ENCODE measurements at regions of chr5 and their contacts with region 1.

Region 1: DNA sequence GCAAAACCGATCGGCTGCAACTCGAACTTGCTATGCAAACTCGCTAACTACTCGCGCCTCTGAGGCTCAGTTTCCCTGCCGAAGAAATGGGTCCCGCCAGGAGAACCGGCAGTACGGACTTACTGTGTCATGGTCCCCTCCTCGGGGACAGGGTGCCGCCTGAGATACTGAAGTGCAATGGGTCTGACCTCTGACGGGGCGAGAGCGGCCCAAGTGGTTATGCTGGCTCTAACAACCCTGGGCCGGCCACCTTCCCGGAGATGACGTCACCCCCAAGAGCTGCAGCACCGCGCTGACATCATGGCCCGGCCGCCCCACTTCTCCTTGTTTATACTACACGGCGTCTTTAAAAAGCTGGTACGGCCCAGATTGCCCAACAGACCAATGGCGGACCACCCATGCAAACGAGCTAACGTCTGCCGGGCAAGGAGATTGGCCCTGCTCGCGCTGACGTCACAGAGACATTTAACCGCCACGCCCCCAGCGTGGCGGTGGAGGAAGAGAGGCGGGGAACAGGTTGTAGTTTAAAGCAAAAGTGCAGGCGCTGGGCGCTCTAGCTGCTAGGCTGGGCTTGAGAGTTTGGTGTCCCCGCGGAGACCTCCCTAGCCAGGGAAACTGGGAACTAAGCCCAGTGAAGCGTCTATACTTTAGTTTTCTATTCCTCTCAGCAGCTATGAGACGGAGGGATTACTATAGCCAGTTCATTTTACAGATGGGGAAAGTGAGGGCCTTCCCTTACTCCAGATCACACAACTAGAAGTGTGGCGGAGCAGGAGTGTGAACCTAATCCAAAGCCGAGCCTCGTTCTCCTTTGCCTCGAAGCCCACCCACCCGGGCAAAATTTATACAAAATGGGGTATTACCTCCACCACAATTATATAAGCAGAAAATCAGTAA is 654 bp upstream of the RNF44 start:
- H3K4me3 Mint-ChIP-seq: peak overlapping the region; percentile 94
- H3K27ac Mint-ChIP-seq: peak overlapping the region; percentile 96
- H3K4me1 Mint-ChIP-seq: peaks cover 72% of the 10 kb centered on the region
- H3K27me3 Mint-ChIP-seq: no peaks in the 10 kb centered on the region

Region 2: GRCh38 chr5:176388444-176389134 is 149.3 kb before region 1 on chr5 and contains the starts of genes HIGD2A and NOP16:
- intact Hi-C with region 1: loop called (anchors 10 kb)
- H3K4me3 Mint-ChIP-seq: peak within 1 kb of the TSS; percentile 100
- H3K27ac Mint-ChIP-seq: peak within 1 kb of the TSS; percentile 100
- H3K4me1 Mint-ChIP-seq: peaks cover 77% of the 10 kb centered on the region
- H3K27me3 Mint-ChIP-seq: no peaks in the 10 kb centered on the region

Region 3: GRCh38 chr5:176553262-176554077 is 15.6 kb after region 1 on chr5:
- intact Hi-C with region 1: no loop called
- H3K4me3 Mint-ChIP-seq: no peak overlapping the region
- H3K27ac Mint-ChIP-seq: no peak overlapping the region
- H3K4me1 Mint-ChIP-seq: peaks cover 54% of the 10 kb centered on the region
- H3K27me3 Mint-ChIP-seq: peaks cover 36% of the 10 kb centered on the region

Region 4: GRCh38 chr5:176573564-176574296 is 35.9 kb after region 1 on chr5:
- intact Hi-C with region 1: loop called (anchors 1 kb)
- H3K4me3 Mint-ChIP-seq: no peak overlapping the region
- H3K27ac Mint-ChIP-seq: no peak overlapping the region
- H3K4me1 Mint-ChIP-seq: peaks cover 7% of the 10 kb centered on the region
- H3K27me3 Mint-ChIP-seq: peaks cover 21% of the 10 kb centered on the region

Region 5: DNA sequence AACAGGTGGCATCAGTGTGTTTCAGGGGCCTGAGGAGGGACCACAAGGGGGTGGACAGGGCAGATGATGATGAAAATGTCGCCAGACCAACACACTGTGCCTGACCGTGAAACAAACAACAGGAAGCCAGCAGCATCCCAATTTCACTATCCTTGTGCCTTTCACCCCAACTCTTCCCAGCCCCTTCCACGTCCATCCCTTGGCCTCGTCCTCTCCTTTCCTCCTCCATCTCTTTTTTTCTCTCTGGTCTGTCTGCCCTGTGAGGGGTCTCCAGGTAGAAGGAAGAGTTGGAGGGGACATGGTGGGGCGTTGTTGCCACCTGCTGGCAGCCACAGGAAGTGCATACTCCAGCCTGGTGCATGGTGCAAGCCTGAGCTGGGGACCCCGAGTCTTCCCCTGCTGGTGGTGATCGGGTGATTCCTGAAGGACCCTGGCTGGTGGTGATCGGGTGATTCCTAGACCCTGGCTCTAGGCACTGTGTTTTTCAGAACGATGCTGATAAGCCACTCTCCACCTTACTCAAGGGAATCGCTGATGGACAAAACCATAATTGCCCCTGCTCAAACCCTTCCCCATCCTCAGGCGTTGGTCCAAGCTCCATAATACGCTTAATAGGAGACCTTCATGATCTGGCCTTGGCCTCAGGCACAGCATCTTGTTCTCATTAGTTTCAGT is 574.0 kb after region 1 on chr5:
- intact Hi-C with region 1: no loop called
- H3K4me3 Mint-ChIP-seq: no peak overlapping the region
- H3K27ac Mint-ChIP-seq: no peak overlapping the region
- H3K4me1 Mint-ChIP-seq: peaks cover 33% of the 10 kb centered on the region
- H3K27me3 Mint-ChIP-seq: peaks cover 2% of the 10 kb centered on the region